Endothelial cell of umbilical vein (primary cell): ENCODE measurements at regions of chr19 and their contacts with region 1.

Region 1: GRCh38 chr19:43446746-43447489 is 18.5 kb downstream of the LYPD3 start:
- DNase-seq: peak; percentile 65
- H3K4me3 ChIP-seq: no peak overlapping the region
- H3K27ac ChIP-seq: no peak overlapping the region
- H3K4me1 ChIP-seq: no peaks in the 10 kb centered on the region
- H3K27me3 ChIP-seq: no peaks in the 10 kb centered on the region
- CTCF ChIP-seq: peak; percentile 79 to 88
- POLR2A ChIP-seq: no peak

Region 2: DNA sequence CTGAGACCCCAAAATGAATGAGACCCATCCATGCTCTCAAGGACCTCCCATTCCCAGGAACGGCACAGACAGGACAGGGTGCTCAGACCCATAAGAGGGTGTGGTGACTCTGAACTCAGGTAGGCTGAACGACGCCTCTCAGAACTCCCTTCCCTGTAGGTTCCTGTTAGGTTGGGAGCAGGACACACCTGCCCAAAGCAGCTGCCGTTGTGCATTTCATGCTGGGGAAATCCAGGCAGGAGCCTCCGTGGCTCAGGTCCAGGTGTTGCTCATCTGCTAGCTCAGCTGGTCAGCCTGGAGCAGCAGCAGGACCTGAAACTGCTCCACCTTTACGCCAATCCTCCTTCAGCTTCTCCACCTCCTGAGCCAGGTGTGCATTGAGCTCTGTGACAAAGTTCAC is 51.4 kb before region 1 on chr19:
- CTCF ChIA-PET with region 1: no interaction called
- POLR2A ChIA-PET with region 1: no interaction called
- dilution Hi-C with region 1: no loop called
- intact Hi-C with region 1: no loop called
- DNase-seq: no peak
- H3K4me3 ChIP-seq: no peak overlapping the region
- H3K27ac ChIP-seq: no peak overlapping the region
- H3K4me1 ChIP-seq: no peaks in the 10 kb centered on the region
- H3K27me3 ChIP-seq: no peaks in the 10 kb centered on the region
- CTCF ChIP-seq: no peak
- POLR2A ChIP-seq: no peak

Region 3: GRCh38 chr19:43463381-43464136 is 16.6 kb after region 1 on chr19:
- CTCF ChIA-PET with region 1: interaction called, 30 read pairs
- POLR2A ChIA-PET with region 1: no interaction called
- dilution Hi-C with region 1: no loop called
- intact Hi-C with region 1: no loop called
- DNase-seq: peak; percentile 91
- H3K4me3 ChIP-seq: peak overlapping the region; percentile 52 to 63 (median 58)
- H3K27ac ChIP-seq: no peak overlapping the region
- H3K4me1 ChIP-seq: peaks cover 14% of the 10 kb centered on the region
- H3K27me3 ChIP-seq: no peaks in the 10 kb centered on the region
- CTCF ChIP-seq: no peak
- POLR2A ChIP-seq: no peak

Region 4: DNA sequence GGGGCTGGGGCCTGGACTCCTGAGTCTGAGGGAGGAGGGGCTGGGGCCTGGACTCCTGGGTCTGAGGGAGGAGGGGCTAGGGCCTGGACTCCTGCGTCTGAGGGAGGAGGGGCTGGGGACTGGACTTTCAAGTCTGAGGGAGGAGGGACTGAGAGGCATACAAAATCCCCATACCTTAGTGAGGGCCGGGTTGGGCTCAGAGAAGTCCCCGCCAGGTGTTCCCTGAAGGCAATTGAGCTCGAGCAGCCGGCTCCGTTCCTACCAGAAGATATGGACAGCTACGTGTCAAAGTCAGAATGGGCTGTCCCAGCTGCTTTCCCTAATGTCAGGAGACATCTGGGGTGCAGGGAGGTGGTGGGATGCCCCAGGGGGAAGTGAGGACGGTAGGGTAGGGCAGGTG is 48.2 kb after region 1 on chr19:
- CTCF ChIA-PET with region 1: interaction called, 14 read pairs
- POLR2A ChIA-PET with region 1: no interaction called
- dilution Hi-C with region 1: no loop called
- intact Hi-C with region 1: no loop called
- DNase-seq: no peak
- H3K4me3 ChIP-seq: no peak overlapping the region
- H3K27ac ChIP-seq: no peak overlapping the region
- H3K4me1 ChIP-seq: no peaks in the 10 kb centered on the region
- H3K27me3 ChIP-seq: no peaks in the 10 kb centered on the region
- CTCF ChIP-seq: no peak
- POLR2A ChIP-seq: no peak

Region 5: DNA sequence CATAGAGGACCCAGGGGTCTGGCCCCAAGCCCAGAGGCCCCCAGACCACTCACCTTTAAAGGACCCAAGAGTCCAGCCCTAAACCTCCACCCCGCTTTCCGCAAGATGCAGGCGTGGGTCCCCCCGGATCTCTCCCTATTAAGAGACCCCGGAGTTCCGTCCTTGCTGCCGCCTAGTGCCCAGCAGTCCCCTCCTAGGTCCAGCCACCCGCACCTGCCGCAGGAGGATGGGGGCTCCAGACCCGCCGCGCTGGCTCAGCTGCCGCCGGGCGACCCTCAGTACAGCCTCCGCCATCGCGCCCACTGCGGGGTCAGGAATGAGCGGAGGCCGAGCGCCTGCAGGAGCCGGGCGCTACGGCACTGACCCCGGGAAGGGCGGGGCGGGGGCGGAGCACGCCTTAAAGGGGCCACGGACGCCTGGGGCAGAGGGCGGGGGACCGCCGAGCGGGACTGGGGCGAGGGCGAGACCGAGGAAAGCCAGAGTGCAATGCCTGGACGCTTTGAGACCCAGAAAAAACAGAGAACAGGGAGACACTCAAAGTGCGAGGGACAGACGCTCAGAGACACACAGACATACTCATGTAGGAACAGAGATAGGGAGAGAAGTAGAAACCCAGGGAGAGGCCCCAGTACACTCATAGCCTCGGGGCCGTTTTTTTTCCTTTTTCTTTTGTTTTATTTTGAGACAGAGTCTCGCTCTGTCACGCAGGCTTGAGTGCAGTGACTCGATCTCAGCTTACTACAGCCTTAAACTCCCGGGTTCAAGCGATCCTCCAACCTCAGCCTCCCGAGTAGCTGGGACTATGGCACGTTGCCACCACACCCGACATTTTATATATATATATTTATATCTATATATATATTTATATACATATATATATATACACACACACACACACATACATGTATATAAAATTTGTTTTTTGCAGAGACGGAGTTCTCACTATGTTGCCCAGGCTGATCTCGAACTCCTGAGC is 80.3 kb after region 1 on chr19 and contains the start of gene ETHE1:
- CTCF ChIA-PET with region 1: interaction called, 833 read pairs
- POLR2A ChIA-PET with region 1: no interaction called
- dilution Hi-C with region 1: no loop called
- intact Hi-C with region 1: no loop called
- DNase-seq: peak; percentile 72
- H3K4me3 ChIP-seq: peak within 1 kb of the TSS; percentile 82 to 97 (median 83)
- H3K27ac ChIP-seq: peak within 1 kb of the TSS; percentile 16
- H3K4me1 ChIP-seq: peaks cover 15% of the 10 kb centered on the region
- H3K27me3 ChIP-seq: no peaks in the 10 kb centered on the region
- CTCF ChIP-seq: no peak
- POLR2A ChIP-seq: peak; percentile 95
- total RNA-seq, gene ETHE1: 29.4 and 34.5 TPM in 2 replicates

Region 6: GRCh38 chr19:43595999-43596841 is 149.3 kb after region 1 on chr19 and contains the starts of genes IRGQ and ZNF576:
- CTCF ChIA-PET with region 1: interaction called, 17 read pairs
- POLR2A ChIA-PET with region 1: no interaction called
- dilution Hi-C with region 1: no loop called
- intact Hi-C with region 1: loop called (anchors 1 kb)
- DNase-seq: peak; percentile 100
- H3K4me3 ChIP-seq: peak within 1 kb of the TSS; percentile 69 to 89 (median 74)
- H3K27ac ChIP-seq: peak within 1 kb of the TSS; percentile 96
- H3K4me1 ChIP-seq: peaks cover 24% of the 10 kb centered on the region
- H3K27me3 ChIP-seq: no peaks in the 10 kb centered on the region
- CTCF ChIP-seq: no peak
- POLR2A ChIP-seq: peak; percentile 81
- total RNA-seq, gene IRGQ: 33.2 and 34.1 TPM in 2 replicates
- total RNA-seq, gene ZNF576: 19.5 and 20.3 TPM in 2 replicates